A673 (cell line): ENCODE measurements at regions of chrX and their contacts with region 1.

Region 1: DNA sequence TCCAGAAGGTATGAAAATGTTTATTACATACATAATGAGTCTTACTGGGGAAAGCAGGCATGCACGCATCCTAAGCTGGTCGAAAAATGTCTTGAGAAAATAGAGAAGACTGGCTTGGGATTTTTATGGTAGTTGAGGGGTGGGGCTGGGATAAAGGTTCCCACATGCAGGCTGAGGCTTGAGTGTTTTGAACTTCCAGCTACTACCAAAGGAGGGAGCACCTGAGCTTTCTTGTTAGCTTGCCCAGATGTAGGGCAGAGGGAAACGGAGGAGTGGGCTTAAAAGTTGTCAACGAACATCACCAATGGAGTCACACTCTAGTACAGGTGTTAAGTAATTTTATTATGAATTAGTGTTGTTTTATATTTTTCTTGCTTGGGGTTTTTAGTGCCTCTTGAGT is 39.6 kb upstream of the SRPX start:
- DNase-seq: peak; percentile 46
- H3K4me3 ChIP-seq: no peak overlapping the region
- H3K27ac ChIP-seq: no peak overlapping the region
- H3K4me1 ChIP-seq: no peaks in the 10 kb centered on the region
- H3K27me3 ChIP-seq: no peaks in the 10 kb centered on the region
- CTCF ChIP-seq: peak; percentile 61

Region 2: GRCh38 chrX:38327007-38327774 is 67.0 kb after region 1 on chrX and contains the start of gene RPGR:
- CTCF ChIA-PET with region 1: interaction called, 7 read pairs
- POLR2A ChIA-PET with region 1: no interaction called
- intact Hi-C with region 1: loop called (anchors 5 kb)
- DNase-seq: peak; percentile 93
- H3K4me3 ChIP-seq: peak within 1 kb of the TSS; percentile 73
- H3K27ac ChIP-seq: peak within 1 kb of the TSS; percentile 47
- H3K4me1 ChIP-seq: no peaks in the 10 kb centered on the region
- H3K27me3 ChIP-seq: no peaks in the 10 kb centered on the region
- CTCF ChIP-seq: peak; percentile 86
- total RNA-seq, gene RPGR: 12.3 and 15.1 TPM in 2 replicates